Esophagus muscularis mucosa (tissue), 4 donors: ENCODE measurements at regions of chr3 and their contacts with region 1.

Region 1: GRCh38 chr3:127970966-127971592 is 56.0 kb downstream of the KBTBD12 start:
- DNase-seq: no peak
- H3K4me3 ChIP-seq: no peak overlapping the region
- H3K27ac ChIP-seq: no peak overlapping the region
- H3K4me1 ChIP-seq: peaks cover 4 to 14% (median 9%) of the 10 kb centered on the region in 4 donors
- H3K27me3 ChIP-seq: no peaks in the 10 kb centered on the region
- CTCF ChIP-seq: peak; percentile 46 to 63 (median 51)
- EP300 ChIP-seq: no peak
- POLR2A ChIP-seq: no peak

Region 2: GRCh38 chr3:127652231-127652995 is 318.7 kb before region 1 on chr3:
- intact Hi-C with region 1: loop called (anchors 5 kb)
- DNase-seq: no peak
- H3K4me3 ChIP-seq: no peak overlapping the region
- H3K27ac ChIP-seq: no peak overlapping the region
- H3K4me1 ChIP-seq: peaks cover 4 to 14% (median 12%) of the 10 kb centered on the region in 4 donors
- H3K27me3 ChIP-seq: no peaks in the 10 kb centered on the region
- CTCF ChIP-seq: peak; percentile 84 to 90 (median 85)
- EP300 ChIP-seq: no peak
- POLR2A ChIP-seq: no peak